ENCODE measurements at regions of chr16 and their contacts with region 1.

Region 1: GRCh38 chr16:59088431-59088830 is 354.3 kb upstream of the GOT2 start:
- DNase-seq: no peak
- H3K4me3 ChIP-seq: no peak overlapping the region
- H3K27ac ChIP-seq: no peak overlapping the region
- H3K4me1 ChIP-seq: no peaks in the 10 kb centered on the region
- H3K27me3 ChIP-seq: no peaks in the 10 kb centered on the region
- CTCF ChIP-seq: no peak
- POLR2A ChIP-seq: no peak

Region 2: DNA sequence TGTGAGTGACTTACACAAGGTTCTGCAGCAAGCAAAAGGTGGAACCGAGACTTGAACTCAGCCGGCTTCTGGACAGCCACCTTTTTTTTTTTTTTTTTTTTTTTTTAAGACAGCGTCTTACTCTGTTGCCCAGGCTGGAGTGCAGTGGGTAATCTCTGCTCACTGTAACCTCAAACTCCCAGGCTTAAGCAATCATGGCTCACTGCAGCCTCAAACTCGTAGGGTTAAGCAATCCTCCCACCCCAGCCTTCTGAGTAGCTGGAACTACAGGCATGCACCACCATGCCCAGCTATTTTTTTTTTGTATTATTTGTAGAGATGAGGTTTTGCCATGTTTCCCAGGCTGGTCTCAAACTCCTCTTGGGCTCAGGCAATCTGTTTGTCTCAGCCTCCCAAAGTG is 299.1 kb before region 1 on chr16:
- CTCF ChIA-PET with region 1: no interaction called
- POLR2A ChIA-PET with region 1: no interaction called
- dilution Hi-C with region 1: no loop called
- intact Hi-C with region 1: no loop called
- DNase-seq: no peak
- H3K4me3 ChIP-seq: no peak overlapping the region
- H3K27ac ChIP-seq: no peak overlapping the region
- H3K4me1 ChIP-seq: no peaks in the 10 kb centered on the region
- H3K27me3 ChIP-seq: no peaks in the 10 kb centered on the region
- CTCF ChIP-seq: no peak
- POLR2A ChIP-seq: no peak

Region 3: DNA sequence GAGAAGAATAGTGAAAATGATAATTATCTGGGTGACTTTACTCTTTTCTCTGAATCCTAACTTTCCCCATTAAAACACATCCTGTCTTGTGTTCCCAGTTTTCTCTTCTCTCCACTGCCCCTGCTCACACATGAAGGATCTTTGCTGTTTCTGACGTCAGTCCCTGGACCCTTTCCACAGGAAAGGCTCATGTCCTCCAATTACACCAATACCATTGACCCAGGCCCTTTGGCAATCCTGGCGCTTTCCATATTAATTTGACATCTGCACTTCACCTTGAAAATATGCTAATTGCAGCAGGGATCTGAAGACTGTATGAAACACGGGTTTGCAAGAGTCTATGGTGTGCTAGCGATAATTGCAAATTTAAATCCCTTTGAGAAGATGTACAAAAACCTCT is 184.1 kb before region 1 on chr16:
- CTCF ChIA-PET with region 1: no interaction called
- POLR2A ChIA-PET with region 1: no interaction called
- dilution Hi-C with region 1: no loop called
- intact Hi-C with region 1: loop called (anchors 5 kb)
- DNase-seq: no peak
- H3K4me3 ChIP-seq: no peak overlapping the region
- H3K27ac ChIP-seq: no peak overlapping the region
- H3K4me1 ChIP-seq: no peaks in the 10 kb centered on the region
- H3K27me3 ChIP-seq: no peaks in the 10 kb centered on the region
- CTCF ChIP-seq: no peak
- POLR2A ChIP-seq: no peak